Common myeloid progenitor, CD34-positive (primary cell): ENCODE measurements at regions of chr2 and their contacts with region 1.

Region 1: GRCh38 chr2:64876137-64876647 is 113.0 kb upstream of the SLC1A4 start:
- DNase-seq: no peak
- H3K4me3 ChIP-seq: no peak overlapping the region
- H3K27ac ChIP-seq: no peak overlapping the region
- H3K4me1 ChIP-seq: peaks cover 0 to 10% (median 2%) of the 10 kb centered on the region in 4 experiments
- H3K27me3 ChIP-seq: no peaks in the 10 kb centered on the region

Region 2: DNA sequence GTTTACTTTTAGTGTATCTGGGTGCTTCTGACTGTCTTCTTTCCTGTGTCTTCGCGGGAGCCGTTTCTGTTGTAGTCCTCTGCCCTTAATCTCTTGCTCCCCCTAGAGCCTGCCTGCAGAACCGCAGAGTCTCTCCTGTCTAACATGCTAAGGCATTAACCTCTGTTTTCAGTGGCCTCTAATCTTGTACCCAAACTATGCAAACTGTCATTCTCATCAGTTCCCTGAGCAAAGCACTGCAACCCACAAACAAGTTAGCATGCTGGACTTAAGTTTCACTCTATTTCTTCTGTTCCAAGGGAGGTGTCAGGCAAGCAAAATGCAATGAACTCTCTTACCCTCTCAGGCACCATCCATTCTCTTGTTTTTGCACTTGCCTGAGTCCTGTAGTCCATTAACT is 1687.2 kb before region 1 on chr2:
- CTCF ChIA-PET with region 1: no interaction called
- POLR2A ChIA-PET with region 1: no interaction called
- DNase-seq: no peak
- H3K4me3 ChIP-seq: no peak overlapping the region
- H3K27ac ChIP-seq: no peak overlapping the region
- H3K4me1 ChIP-seq: no peaks in the 10 kb centered on the region
- H3K27me3 ChIP-seq: no peaks in the 10 kb centered on the region

Region 3: DNA sequence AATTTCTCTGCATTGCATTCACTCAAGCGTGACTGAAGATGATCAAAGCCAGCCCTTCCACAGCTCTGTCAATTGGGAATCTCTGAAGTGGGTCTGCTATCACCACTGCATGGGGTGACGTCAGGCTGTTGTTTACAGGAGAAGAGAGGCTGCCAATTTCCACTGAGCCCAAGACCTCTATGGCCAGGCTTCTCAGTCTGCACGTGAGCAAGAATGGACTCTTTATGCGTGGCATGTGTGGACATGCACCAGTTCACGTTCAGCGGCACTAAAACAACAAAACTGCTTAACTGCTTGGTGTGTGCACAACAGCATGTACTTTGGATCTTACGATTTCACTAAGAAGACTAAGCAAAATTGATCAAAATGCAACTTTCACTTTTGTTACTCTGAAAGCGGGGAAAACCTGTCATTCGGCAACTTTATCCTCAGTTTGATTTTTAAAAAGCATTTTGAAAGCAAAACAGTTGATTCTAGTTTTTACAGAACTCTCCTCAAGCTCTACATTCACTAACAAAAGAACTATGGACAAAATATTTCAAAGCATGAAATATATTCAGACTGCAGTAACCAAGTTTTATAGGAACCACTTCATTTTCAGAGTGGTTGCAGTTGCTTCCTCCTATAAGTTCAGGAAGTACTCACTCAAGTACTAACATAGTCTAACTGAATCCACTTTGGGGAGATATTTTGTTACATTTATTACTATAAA is 145.5 kb before region 1 on chr2:
- CTCF ChIA-PET with region 1: no interaction called
- POLR2A ChIA-PET with region 1: no interaction called
- DNase-seq: peak in 2 of 3 donors; percentile 60 to 66
- H3K4me3 ChIP-seq: peak overlapping the region in 6 of 7 experiments; percentile 6 to 78 (median 58)
- H3K27ac ChIP-seq: peak overlapping the region; percentile 37 to 78
- H3K4me1 ChIP-seq: peaks cover 25 to 51% (median 42%) of the 10 kb centered on the region in 4 experiments
- H3K27me3 ChIP-seq: no peaks in the 10 kb centered on the region

Region 4: DNA sequence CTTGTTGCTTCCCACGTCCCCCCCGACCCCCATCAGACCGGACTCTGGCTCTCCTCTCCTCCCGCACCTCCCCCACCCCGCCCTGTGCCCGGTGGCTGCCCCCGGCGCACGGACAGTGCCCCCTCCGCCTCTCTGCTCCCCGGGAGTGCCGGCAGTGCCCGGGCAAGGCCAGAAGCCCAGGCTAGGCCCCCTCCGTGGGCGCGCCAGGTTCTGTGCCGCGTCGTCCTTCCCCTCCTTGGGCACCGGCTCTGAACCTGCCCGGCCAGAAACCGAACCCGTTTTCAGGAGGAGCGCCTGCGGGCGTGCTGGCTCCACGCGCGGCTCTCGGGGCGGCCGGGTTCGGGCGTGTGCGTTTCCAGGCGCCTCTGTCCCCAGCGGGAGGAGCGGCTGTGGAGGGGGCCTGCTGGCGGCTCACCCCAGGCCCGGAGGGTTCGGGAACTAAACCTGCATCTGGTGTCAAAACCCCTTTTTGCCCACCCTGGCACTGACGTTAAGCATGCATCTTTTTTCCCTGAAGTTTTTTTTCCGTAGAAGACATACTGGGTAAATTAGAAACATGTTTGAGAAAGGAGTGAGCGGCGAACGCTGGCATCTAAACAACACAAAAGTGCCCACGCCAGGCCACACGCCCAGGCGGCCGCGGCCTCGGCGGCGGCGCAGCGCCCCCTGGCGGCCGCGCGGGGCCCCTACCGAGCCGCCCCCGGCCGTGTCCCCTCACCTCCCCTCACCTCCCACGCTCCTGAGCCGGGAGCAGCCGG is 10.9 kb before region 1 on chr2:
- CTCF ChIA-PET with region 1: interaction called, 11 read pairs
- POLR2A ChIA-PET with region 1: no interaction called
- DNase-seq: peak; percentile 61 to 84 (median 82)
- H3K4me3 ChIP-seq: peak overlapping the region; percentile 42 to 83 (median 75)
- H3K27ac ChIP-seq: peak overlapping the region in 1 of 2 experiments; percentile 65
- H3K4me1 ChIP-seq: peaks cover 10 to 52% (median 23%) of the 10 kb centered on the region in 4 experiments
- H3K27me3 ChIP-seq: no peaks in the 10 kb centered on the region

Region 5: DNA sequence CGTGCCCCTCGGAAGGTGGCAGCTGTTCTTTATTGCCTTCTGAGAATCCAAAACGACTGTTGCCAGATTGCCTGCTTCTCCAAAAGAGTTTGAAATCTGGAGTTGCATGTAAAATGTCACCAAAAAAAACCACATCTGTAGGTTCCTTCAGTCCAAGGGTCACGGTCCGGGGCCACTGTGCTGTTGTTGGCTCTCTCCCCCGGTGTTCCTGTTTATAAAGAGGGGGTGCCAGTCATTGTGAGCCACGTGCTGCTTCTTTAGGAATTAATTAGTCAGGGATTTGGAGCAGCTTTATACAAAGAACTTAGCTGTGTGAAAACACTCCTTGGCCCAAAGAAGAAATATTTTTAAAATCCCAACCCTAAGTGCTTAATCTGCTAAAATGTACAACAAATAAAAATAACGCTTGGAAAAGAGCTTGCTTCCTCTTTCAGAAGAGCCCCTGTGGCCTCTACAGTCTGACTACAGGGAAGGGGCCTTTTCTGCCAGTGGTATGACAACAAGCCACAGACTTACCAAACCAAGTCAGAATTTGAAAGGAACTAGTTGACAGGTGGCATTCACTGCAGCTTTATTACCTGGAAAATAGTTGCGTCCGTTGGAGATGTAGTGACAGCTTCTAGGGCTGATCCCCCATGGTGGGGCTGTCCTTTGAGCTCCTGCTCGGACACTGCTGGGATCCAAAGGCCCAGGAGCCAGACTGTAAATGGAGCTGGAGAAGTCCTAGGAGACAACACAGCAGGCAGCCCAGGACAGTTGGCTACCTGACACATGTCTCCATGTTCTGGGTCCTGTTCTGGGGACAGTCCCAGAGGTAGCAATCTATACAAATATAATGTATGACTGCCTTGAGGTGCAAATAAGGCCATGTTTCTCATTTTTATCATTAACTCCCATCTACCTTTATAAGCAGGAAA is 28.5 kb after region 1 on chr2:
- CTCF ChIA-PET with region 1: interaction called, 10 read pairs
- POLR2A ChIA-PET with region 1: no interaction called
- DNase-seq: peak in 2 of 3 donors; percentile 62 to 67
- H3K4me3 ChIP-seq: peak overlapping the region in 2 of 7 experiments; percentile 16 to 33
- H3K27ac ChIP-seq: no peak overlapping the region
- H3K4me1 ChIP-seq: peaks cover 0 to 39% (median 15%) of the 10 kb centered on the region in 4 experiments
- H3K27me3 ChIP-seq: no peaks in the 10 kb centered on the region